ENCODE measurements at regions of chr10 and their contacts with region 1.

Region 1: DNA sequence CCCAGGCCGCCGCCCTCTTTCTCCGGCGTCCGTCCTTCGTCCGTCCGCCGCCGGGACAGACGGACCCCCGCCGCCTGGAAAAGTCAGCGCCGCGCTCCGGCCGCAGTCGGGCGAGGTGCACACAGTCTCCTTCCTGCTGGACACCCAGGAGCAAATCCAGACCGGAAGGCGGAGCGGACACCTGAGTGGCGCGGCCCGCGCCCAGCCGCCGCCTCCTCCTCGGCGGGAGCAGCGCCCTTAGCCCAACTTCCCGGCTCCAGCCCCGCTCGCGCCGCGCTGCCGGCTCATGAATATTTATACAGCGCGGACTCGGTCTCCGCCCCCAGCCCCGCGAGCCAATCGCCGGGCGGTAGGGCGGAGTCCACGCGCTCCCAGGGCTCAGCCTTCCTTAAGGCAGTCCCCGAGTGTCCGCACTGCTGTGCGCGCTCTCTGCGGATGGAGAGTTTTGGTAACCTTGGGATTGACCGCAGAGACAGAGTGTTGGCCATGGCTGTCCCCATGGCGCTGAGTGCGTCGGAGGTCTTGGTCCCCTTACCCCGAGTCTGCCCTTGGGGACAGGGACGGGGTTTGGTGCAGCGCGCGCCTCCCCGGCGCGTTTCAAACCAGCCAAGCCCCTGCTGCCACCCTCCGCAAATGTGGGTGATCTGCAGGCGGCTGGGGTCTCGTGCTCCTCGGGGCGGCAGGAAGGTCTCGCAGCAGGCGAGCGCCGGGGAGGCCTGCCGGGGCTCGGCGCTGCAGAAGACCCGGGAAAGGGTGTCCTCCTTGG is at the start of gene FZD8:
- ATAC-seq: peak; percentile 75 to 82 (median 81)
- H3K4me3 ChIP-seq: peak within 1 kb of the TSS; percentile 46 to 83 (median 68)
- H3K27ac ChIP-seq: no peak within 1 kb of the TSS
- H3K4me1 ChIP-seq: peaks cover 14 to 15% of the 10 kb centered on the region in 2 donors
- total RNA-seq, gene FZD8: 1.1 to 11.9 (median 3.8) TPM

Region 2: GRCh38 chr10:35208536-35208935 is 433.7 kb before region 1 on chr10:
- in situ Hi-C with region 1: no loop called
- ATAC-seq: no peak
- H3K4me3 ChIP-seq: no peak overlapping the region
- H3K27ac ChIP-seq: no peak overlapping the region
- H3K4me1 ChIP-seq: peaks cover 0 to 3% of the 10 kb centered on the region in 2 donors

Region 3: DNA sequence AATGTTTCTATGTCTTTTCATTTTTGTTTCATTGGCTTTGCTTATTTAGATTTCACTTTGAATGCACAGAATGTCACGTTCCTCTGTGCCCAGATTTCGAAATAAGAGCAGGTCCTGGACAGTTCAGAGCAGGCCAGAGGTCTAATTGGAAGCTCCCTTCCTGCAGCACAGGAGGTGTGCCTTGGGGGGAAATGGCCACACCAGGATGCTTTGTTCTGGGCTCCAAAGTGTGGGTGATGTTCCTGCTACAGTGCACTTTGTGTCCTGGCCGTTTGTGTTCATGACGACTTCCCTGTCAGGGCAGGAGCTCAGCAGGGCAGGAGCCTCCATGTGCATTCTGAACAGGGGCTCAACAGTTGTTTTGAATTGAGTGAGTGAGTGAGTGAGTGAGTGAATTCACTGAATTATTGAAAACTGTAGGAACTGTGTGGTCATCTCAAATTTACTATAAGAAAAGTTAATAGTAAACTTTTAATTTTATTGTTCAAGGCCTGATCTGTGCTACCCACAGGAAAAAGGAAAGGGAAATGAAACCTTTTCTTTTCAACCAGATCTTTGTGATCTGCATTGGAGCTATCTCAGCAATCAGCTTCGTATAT is 146.6 kb before region 1 on chr10:
- in situ Hi-C with region 1: no loop called
- ATAC-seq: peak in 2 of 8 experiments; percentile 21 to 66
- H3K4me3 ChIP-seq: no peak overlapping the region
- H3K27ac ChIP-seq: no peak overlapping the region
- H3K4me1 ChIP-seq: peaks cover 4 to 7% of the 10 kb centered on the region in 2 donors

Region 4: DNA sequence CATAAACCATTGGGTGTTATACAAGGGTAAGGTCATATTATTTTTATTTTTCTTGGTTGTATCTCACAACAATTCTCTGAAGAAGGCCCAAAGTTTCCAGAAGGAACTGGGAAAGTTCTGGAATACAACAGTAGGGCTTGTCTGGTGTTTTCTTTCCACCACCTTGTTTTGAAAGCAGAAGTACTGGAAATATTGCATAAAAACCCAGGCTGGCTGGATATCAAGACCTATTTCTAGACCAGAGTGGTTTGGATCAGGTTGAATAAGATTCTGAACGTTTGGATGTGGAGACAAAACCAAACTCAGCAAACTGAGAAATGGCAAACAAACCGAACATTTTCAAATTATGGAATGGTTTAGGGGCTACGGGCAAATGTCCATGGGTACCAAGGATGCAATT is 182.5 kb after region 1 on chr10:
- in situ Hi-C with region 1: no loop called
- ATAC-seq: no peak
- H3K4me3 ChIP-seq: no peak overlapping the region
- H3K27ac ChIP-seq: no peak overlapping the region
- H3K4me1 ChIP-seq: no peaks in the 10 kb centered on the region

Region 5: GRCh38 chr10:35916791-35917190 is 274.6 kb after region 1 on chr10:
- in situ Hi-C with region 1: loop called in 1 of 9 experiments (anchors 25 kb)
- ATAC-seq: peak in 2 of 8 experiments; percentile 50 to 52
- H3K4me3 ChIP-seq: no peak overlapping the region
- H3K27ac ChIP-seq: no peak overlapping the region
- H3K4me1 ChIP-seq: no peaks in the 10 kb centered on the region

Region 6: DNA sequence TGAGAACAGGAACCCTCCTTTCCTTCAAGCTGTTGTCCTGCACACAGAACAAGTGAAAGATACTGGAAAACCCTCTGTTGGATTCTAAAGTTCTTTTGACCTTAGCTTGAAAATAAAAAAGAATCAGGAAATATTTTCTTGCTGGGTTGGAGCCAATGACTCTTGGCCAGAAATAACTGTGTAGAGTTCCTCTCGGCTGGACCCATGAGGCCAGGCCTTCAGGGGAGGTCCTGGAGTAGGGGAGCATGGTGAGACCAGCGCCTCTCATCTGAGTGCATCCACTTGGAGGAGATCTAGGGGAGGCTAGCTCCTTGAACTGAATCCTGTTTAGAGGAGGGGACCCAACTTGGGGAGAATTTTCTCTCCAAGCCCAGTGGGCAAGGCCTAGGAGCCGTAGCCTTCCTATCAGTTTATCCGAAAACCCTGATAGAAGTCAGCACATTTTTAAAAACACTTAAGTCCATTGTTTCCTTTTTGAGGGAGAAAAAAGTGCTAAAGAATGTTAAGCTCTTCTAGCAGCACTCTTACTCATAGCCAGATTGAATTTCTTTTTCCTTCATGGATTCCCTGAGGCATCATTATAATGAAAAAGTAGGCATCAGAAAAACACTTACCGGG is 847.5 kb after region 1 on chr10:
- in situ Hi-C with region 1: loop called in 1 of 9 experiments (anchors 25 kb)
- ATAC-seq: peak in 3 of 8 experiments; percentile 28 to 56 (median 37)
- H3K4me3 ChIP-seq: no peak overlapping the region
- H3K27ac ChIP-seq: no peak overlapping the region
- H3K4me1 ChIP-seq: no peaks in the 10 kb centered on the region

Region 7: GRCh38 chr10:36779234-36779846 is 1137.1 kb after region 1 on chr10:
- in situ Hi-C with region 1: loop called (anchors 10 to 25 kb)
- ATAC-seq: peak; percentile 68 to 98 (median 90)
- H3K4me3 ChIP-seq: no peak overlapping the region
- H3K27ac ChIP-seq: no peak overlapping the region
- H3K4me1 ChIP-seq: no peaks in the 10 kb centered on the region

Region 8: DNA sequence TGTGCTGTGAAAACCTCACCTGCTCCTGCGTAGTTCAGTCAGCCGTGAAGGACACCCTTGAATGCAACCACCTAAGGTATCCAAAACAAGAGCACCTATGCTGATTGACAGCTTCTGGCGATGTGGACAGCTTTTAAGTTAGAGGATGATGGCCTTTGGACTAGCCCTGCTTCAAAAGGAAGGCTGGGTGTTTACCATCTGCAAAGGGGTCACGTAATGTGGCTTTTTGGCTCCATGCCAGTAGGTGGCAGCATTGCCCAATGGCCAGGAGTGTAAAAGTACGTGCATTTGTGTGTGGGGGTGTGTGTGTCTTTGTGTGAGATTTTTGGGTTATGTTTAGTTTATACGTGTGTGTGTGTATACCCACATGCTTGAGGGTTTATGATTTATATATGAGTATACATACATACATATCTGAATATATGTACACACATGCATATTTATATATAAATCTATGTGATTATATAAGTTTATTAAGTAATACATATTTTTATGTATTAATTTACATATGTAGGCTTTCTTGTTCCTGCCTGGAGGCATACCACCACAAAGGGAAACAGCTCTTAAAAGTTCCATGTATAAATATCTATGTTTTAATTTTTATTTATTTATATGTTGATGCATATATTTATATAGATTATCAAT is 1246.8 kb after region 1 on chr10:
- in situ Hi-C with region 1: loop called in 2 of 9 experiments (anchors 25 kb)
- ATAC-seq: peak in 7 of 8 experiments; percentile 55 to 82 (median 72)
- H3K4me3 ChIP-seq: no peak overlapping the region
- H3K27ac ChIP-seq: no peak overlapping the region
- H3K4me1 ChIP-seq: no peaks in the 10 kb centered on the region

Measured in motor neuron (in vitro differentiated cells).